ENCODE measurements at regions of chr19 and their contacts with region 1.

Region 1: DNA sequence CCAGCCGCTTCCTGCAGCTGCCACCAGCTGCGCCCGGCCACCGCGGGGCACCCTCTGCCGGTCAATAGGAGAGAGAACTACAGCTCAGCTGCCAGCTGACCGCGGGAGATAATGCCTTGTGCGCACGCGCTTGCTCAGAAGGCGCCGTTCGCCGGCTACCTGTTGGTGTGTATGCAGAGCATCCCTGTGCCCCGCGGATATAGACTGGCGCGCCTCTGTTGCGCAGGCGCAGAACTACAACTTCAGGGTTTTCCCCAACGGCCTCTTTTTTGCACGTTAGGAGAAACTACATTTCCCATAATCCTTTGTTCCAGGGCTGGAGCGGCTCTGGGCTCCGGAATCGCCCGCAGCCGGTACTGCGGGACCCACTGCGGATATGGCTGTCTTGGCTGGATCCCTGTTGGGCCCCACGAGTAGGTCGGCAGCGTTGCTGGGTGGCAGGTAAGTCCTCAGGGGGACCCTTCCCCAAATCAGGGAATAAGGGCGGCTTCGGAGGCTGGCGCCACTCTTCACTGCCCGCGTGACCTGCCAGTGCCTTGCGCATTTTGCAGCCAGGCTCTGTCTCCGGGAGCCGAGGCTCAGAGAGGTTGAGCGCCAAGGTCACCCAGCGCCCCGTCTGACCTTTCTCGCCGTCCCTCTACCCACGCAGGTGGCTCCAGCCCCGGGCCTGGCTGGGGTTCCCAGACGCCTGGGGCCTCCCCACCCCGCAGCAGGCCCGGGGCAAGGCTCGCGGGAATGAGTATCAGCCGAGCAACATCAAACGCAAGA is at the start of gene MRPL34:
- DNase-seq: peak; percentile 99
- ATAC-seq: peak; percentile 52
- H3K4me3 ChIP-seq: peak within 1 kb of the TSS; percentile 55
- H3K27ac ChIP-seq: peak within 1 kb of the TSS; percentile 61
- H3K4me1 ChIP-seq: peaks cover 8% of the 10 kb centered on the region
- H3K27me3 ChIP-seq: no peaks in the 10 kb centered on the region
- CTCF ChIP-seq: peak; percentile 87
- POLR2A ChIP-seq: no peak
- RAD21 ChIP-seq: peak; percentile 58
- total RNA-seq, gene MRPL34: 7.3 and 17.2 TPM in 2 replicates

Region 2: DNA sequence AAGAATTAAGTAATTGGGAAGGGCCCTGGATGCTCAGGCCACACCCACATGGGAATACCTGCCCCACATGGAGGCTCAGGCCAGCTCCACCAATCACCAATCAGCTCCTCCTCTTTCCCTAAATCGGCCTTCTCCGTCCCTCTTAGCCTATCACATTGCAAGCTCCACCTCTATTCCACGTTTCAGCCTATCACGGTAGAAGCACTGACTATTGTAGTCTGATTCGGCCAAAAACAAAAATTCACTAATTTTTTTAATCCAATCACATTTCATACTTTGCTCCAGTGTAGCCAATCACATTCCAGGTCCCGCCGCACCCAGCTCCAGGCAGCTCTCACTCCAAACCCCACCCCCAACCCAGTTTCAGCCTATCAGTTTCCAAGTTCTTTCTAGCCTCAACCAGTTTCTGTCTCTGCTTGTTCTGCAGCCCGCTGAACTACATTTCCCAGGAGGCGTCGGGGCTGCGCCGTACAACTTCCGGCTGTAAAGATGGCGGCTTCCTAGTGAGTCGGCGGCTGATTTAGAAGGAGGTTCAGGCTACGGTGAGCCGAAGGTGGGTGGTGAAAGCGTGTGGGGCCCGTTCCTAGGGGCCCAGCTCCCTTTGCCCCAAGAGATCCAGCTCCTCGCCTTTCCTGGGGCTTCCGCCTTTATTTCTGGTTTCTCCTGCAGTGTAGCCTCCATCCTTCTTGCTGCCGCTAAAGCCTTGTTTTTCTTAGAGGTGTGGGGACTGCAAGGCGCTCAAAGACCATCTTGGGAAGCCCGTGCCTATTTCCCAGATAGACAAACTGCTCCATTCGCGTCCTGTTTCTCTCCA is 38.5 kb before region 1 on chr19 and contains the start of gene BABAM1:
- CTCF ChIA-PET with region 1: no interaction called
- POLR2A ChIA-PET with region 1: no interaction called
- dilution Hi-C with region 1: no loop called
- in situ Hi-C with region 1: no loop called
- intact Hi-C with region 1: loop called (anchors 1 kb)
- DNase-seq: peak; percentile 100
- ATAC-seq: peak; percentile 99
- H3K4me3 ChIP-seq: peak within 1 kb of the TSS; percentile 69
- H3K27ac ChIP-seq: peak within 1 kb of the TSS; percentile 68
- H3K4me1 ChIP-seq: no peaks in the 10 kb centered on the region; the same call in 1 of the 2 replicates
- H3K27me3 ChIP-seq: no peaks in the 10 kb centered on the region
- CTCF ChIP-seq: no peak
- POLR2A ChIP-seq: peak; percentile 51; the same call in 1 of the 2 replicates
- RAD21 ChIP-seq: no peak
- total RNA-seq, gene BABAM1: 76.7 and 101 TPM in 2 replicates

Region 3: GRCh38 chr19:17292286-17293097 is 13.2 kb before region 1 on chr19:
- CTCF ChIA-PET with region 1: interaction called, 4 read pairs
- POLR2A ChIA-PET with region 1: no interaction called
- dilution Hi-C with region 1: no loop called
- in situ Hi-C with region 1: no loop called
- intact Hi-C with region 1: loop called (anchors 1 kb)
- DNase-seq: peak; percentile 82
- ATAC-seq: peak; percentile 94
- H3K4me3 ChIP-seq: peak overlapping the region; percentile 44
- H3K27ac ChIP-seq: peak overlapping the region; percentile 93
- H3K4me1 ChIP-seq: peaks cover 2% of the 10 kb centered on the region; the same call in 1 of the 2 replicates
- H3K27me3 ChIP-seq: no peaks in the 10 kb centered on the region
- CTCF ChIP-seq: peak; percentile 82
- POLR2A ChIP-seq: no peak; the same call in 1 of the 2 replicates
- RAD21 ChIP-seq: peak; percentile 84

Region 4: GRCh38 chr19:17334414-17335409 is 29.0 kb after region 1 on chr19 and contains the start of gene ANO8:
- CTCF ChIA-PET with region 1: no interaction called
- POLR2A ChIA-PET with region 1: no interaction called
- dilution Hi-C with region 1: no loop called
- in situ Hi-C with region 1: no loop called
- intact Hi-C with region 1: loop called (anchors 1 kb)
- DNase-seq: peak; percentile 99
- ATAC-seq: peak; percentile 74
- H3K4me3 ChIP-seq: peak within 1 kb of the TSS; percentile 70
- H3K27ac ChIP-seq: peak within 1 kb of the TSS; percentile 55
- H3K4me1 ChIP-seq: peaks cover 8% of the 10 kb centered on the region
- H3K27me3 ChIP-seq: no peaks in the 10 kb centered on the region
- CTCF ChIP-seq: no peak
- POLR2A ChIP-seq: no peak
- RAD21 ChIP-seq: no peak
- total RNA-seq, gene ANO8: 1.6 and 1.7 TPM in 2 replicates

Region 5: DNA sequence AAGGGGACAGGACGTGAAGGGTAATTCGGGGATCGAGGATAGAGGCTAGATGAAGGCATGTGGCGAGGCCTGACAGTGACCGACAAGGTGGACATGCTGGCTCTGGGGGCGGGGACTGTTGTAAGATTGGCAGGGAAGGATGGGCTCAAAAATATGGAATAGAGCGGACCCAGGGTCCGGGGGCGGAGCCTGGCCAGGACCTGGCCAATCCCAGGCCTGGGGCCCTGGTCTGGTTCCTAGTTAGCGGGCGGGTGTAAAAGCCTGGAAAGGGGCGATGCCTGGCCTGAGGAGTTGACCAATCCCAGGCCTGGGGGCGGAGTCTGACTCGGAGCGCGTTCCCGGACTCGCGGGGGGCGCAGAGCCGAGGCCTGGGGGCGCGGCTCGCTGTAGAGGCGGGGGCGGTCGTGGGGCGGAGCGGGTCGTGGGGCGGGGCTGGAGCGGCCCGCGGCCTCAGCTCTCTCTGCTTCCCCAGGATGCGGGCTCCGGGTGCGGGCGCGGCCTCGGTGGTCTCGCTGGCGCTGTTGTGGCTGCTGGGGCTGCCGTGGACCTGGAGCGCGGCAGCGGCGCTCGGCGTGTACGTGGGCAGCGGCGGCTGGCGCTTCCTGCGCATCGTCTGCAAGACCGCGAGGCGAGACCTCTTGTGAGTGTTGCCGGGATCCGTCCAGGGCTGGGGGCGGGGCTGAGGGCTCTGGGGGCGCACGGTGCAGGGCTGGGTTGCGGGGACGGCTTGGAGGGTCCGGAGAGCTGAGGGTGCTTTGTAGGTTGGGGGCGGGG is 164.6 kb after region 1 on chr19 and contains the start of gene SLC27A1:
- CTCF ChIA-PET with region 1: no interaction called
- POLR2A ChIA-PET with region 1: no interaction called
- dilution Hi-C with region 1: no loop called
- in situ Hi-C with region 1: no loop called
- intact Hi-C with region 1: no loop called
- DNase-seq: peak; percentile 98
- ATAC-seq: peak; percentile 94
- H3K4me3 ChIP-seq: peak within 1 kb of the TSS; percentile 91
- H3K27ac ChIP-seq: peak within 1 kb of the TSS; percentile 73
- H3K4me1 ChIP-seq: peaks cover 12% of the 10 kb centered on the region
- H3K27me3 ChIP-seq: no peaks in the 10 kb centered on the region
- CTCF ChIP-seq: no peak
- POLR2A ChIP-seq: peak; percentile 58; the same call in 1 of the 2 replicates
- RAD21 ChIP-seq: no peak
- total RNA-seq, gene SLC27A1: 4.8 and 5.6 TPM in 2 replicates

Measured in IMR-90 (cell line).